SK-N-SH (cell line): ENCODE measurements at regions of chr15 and their contacts with region 1.

Region 1: DNA sequence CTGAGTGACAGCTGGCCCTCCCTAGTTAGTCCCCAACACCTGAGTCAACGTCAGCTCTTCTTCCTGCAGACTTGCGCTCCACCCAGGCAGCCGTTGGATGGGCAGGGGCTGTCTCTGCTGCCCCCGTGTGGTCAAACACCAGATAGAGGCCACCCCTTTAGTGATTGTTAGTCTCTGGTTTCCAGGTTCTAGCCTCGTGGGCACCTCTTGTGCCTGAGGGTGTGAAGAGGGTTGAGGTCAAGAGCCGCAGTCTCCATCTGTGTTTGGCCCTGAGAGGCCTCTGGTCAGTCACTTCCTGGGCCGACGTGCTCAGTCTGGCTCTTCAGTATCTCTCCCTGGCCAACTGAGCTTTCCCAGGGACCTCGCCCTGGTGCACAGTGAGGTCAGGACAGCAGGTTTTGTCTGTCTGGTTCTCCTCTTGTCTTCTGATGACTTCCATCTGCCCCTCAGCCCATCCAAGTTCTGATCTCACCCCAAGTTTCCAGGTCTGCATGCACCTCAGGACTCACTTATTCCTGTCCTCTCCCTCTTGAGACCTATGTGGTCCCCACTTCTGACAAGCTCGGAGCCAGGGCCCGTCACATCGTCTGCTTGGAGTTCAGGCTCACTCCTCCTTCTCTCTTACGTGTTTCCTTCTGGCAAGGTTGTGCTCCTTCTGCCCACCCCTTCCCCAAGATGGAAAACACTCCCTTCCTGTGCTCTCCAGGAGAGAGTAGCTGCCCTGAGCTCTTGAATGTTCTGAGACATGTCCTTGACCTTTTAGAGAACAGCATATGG is 20.9 kb downstream of the CD276 start:
- DNase-seq: peak; percentile 86
- H3K4me3 ChIP-seq: no peak overlapping the region; a peak in 1 of 4 replicates
- H3K27ac ChIP-seq: no peak overlapping the region; a peak in 1 of 4 replicates
- H3K4me1 ChIP-seq: peaks cover 0 to 4% of the 10 kb centered on the region in 2 experiments; a peak in 1 of 4 replicates
- H3K27me3 ChIP-seq: no peaks in the 10 kb centered on the region
- CTCF ChIP-seq: peak; percentile 86
- EP300 ChIP-seq: no peak
- RAD21 ChIP-seq: peak; percentile 72

Region 2: DNA sequence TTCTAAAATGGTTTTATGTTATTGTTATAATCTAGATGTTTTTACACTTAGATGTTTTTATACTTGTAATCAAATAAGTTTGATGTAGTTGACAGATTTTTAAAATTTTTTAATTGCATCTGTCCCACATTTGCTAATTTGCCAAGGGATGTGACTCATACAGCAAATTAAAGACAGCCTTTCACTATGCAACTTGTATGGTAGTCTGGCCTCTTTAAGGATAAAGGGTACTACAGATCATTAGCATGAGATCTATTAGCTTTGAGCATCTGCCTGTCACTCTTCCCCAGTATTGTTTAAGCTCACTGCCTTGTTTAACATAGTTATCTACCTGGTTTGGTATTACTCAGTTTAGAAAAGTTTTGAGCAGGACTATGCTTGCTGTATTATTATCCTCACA is 154.9 kb before region 1 on chr15:
- CTCF ChIA-PET with region 1: interaction called, 10 read pairs
- POLR2A ChIA-PET with region 1: no interaction called
- DNase-seq: no peak
- H3K4me3 ChIP-seq: no peak overlapping the region
- H3K27ac ChIP-seq: no peak overlapping the region
- H3K4me1 ChIP-seq: no peaks in the 10 kb centered on the region
- H3K27me3 ChIP-seq: no peaks in the 10 kb centered on the region
- CTCF ChIP-seq: no peak
- EP300 ChIP-seq: no peak
- RAD21 ChIP-seq: no peak

Region 3: GRCh38 chr15:73573572-73573971 is 131.5 kb before region 1 on chr15:
- CTCF ChIA-PET with region 1: interaction called, 12 read pairs
- POLR2A ChIA-PET with region 1: no interaction called
- DNase-seq: no peak
- H3K4me3 ChIP-seq: no peak overlapping the region
- H3K27ac ChIP-seq: no peak overlapping the region
- H3K4me1 ChIP-seq: peaks cover 0 to 2% of the 10 kb centered on the region in 2 experiments; a peak in 1 of 4 replicates
- H3K27me3 ChIP-seq: no peaks in the 10 kb centered on the region
- CTCF ChIP-seq: no peak
- EP300 ChIP-seq: no peak
- RAD21 ChIP-seq: no peak

Region 4: GRCh38 chr15:73727330-73727976 is 22.4 kb after region 1 on chr15:
- CTCF ChIA-PET with region 1: interaction called, 46 read pairs
- POLR2A ChIA-PET with region 1: no interaction called
- DNase-seq: no peak
- H3K4me3 ChIP-seq: no peak overlapping the region
- H3K27ac ChIP-seq: no peak overlapping the region
- H3K4me1 ChIP-seq: peaks cover 0 to 3% of the 10 kb centered on the region in 2 experiments; a peak in 1 of 4 replicates
- H3K27me3 ChIP-seq: no peaks in the 10 kb centered on the region
- CTCF ChIP-seq: no peak
- EP300 ChIP-seq: no peak
- RAD21 ChIP-seq: no peak

Region 5: GRCh38 chr15:73789521-73790240 is 84.6 kb after region 1 on chr15:
- CTCF ChIA-PET with region 1: no interaction called
- POLR2A ChIA-PET with region 1: no interaction called
- DNase-seq: no peak
- H3K4me3 ChIP-seq: no peak overlapping the region
- H3K27ac ChIP-seq: no peak overlapping the region
- H3K4me1 ChIP-seq: no peaks in the 10 kb centered on the region; a peak in 1 of 4 replicates
- H3K27me3 ChIP-seq: no peaks in the 10 kb centered on the region
- CTCF ChIP-seq: no peak
- EP300 ChIP-seq: no peak
- RAD21 ChIP-seq: no peak

Region 6: GRCh38 chr15:73838831-73839426 is 133.9 kb after region 1 on chr15:
- CTCF ChIA-PET with region 1: interaction called, 16 read pairs
- POLR2A ChIA-PET with region 1: no interaction called
- DNase-seq: peak; percentile 89
- H3K4me3 ChIP-seq: no peak overlapping the region
- H3K27ac ChIP-seq: peak overlapping the region in 1 of 2 experiments; percentile 76; a peak in 2 of 4 replicates
- H3K4me1 ChIP-seq: peaks cover 0 to 53% of the 10 kb centered on the region in 2 experiments; a peak in 1 of 4 replicates
- H3K27me3 ChIP-seq: peaks cover 35% of the 10 kb centered on the region
- CTCF ChIP-seq: no peak
- EP300 ChIP-seq: peak in 1 of 2 experiments; percentile 94; a peak in 2 of 4 replicates
- RAD21 ChIP-seq: peak; percentile 28; the same call in 1 of the 2 replicates